A673 (cell line): ENCODE measurements at regions of chr6 and their contacts with region 1.

Region 1: DNA sequence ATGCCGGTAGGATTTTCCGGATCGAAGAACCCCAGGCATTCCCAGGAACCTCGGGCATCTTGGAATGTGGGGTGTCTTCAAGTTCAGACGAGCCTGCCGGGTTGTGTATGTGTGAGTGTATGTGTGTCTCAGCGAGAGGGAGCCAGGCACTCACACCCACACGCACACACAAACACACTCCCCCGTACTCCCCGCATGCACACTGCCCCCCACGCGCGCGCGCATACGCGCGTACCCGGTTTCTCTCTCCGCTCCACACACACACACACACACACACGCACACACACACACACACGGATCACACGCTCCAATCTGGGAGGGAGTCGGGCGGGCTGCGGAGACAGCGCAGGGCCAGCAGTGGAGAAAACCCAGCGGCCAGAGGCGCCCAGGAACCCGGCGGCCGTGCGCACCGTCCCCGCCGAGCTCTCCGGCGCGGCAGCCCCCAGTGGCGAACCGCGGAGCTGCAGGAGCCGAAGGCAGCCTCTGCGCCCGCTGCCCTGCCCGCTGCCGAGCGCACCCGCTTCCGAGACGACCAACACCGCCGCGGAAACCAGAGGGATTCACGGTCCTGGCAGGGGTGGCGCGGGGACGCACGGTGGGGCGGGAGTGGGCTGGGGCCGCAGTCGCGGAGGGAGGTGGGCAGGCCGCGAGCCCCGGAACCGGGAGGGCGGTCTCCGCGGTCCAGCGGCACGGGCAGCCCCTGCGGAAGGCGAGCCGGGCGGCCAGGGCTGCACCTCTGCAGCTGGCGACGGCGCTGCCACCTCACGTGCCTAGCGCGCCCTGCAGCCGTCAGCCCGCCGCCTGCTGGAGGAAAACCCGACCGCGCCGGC is at the start of gene LRFN2:
- DNase-seq: peak; percentile 93
- H3K4me3 ChIP-seq: peak within 1 kb of the TSS; percentile 90
- H3K27ac ChIP-seq: peak within 1 kb of the TSS; percentile 89
- H3K4me1 ChIP-seq: peaks cover 35% of the 10 kb centered on the region
- H3K27me3 ChIP-seq: no peaks in the 10 kb centered on the region
- CTCF ChIP-seq: peak; percentile 68
- total RNA-seq, gene LRFN2: 22.3 and 26.6 TPM in 2 replicates

Region 2: GRCh38 chr6:40328405-40328987 is 259.0 kb before region 1 on chr6:
- CTCF ChIA-PET with region 1: no interaction called
- POLR2A ChIA-PET with region 1: no interaction called
- intact Hi-C with region 1: loop called (anchors 10 kb)
- DNase-seq: peak; percentile 36
- H3K4me3 ChIP-seq: no peak overlapping the region
- H3K27ac ChIP-seq: no peak overlapping the region
- H3K4me1 ChIP-seq: peaks cover 44% of the 10 kb centered on the region
- H3K27me3 ChIP-seq: no peaks in the 10 kb centered on the region
- CTCF ChIP-seq: peak; percentile 71

Region 3: DNA sequence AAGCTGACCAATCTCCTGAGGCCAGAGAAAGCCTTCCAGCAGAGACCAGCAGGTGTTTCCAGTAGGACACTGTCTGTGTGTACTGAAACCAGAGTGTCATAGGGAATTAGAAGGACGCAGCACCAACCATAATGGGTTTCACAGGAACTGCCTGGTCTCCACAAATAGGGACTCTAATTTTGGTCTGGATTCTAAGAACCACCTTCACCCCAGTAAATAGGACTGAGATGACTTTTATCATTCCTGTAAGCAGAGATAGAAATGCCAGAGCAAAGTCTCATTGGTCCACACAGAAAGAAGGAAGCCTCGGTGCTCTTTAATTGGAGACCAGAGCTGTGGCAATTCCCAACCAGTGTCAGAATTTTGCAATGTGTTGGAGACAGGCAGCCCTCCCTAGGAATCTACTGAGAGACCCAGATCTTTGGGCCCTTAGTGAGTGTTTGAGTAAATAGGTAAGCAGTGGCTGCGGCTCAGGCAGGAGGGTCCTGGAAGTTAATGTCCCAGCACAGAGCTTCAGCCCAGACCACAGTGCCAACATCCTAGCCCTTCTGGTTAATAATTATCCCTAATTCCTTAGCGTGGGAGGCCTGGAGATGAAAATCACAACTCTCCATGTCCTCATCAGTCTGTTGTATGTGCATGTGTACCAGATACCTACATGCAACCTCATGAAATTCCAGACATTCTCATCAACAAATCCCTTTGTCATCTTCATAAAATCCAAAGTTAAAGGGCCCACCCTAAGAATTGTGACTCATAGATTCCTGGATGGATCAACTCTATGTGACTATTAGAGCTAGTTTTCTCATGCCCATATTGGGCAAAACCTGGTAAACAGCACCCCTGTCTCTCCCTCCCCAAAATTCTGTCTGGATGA is 370.4 kb after region 1 on chr6:
- CTCF ChIA-PET with region 1: no interaction called
- POLR2A ChIA-PET with region 1: no interaction called
- intact Hi-C with region 1: no loop called
- DNase-seq: no peak
- H3K4me3 ChIP-seq: no peak overlapping the region
- H3K27ac ChIP-seq: no peak overlapping the region
- H3K4me1 ChIP-seq: no peaks in the 10 kb centered on the region
- H3K27me3 ChIP-seq: no peaks in the 10 kb centered on the region
- CTCF ChIP-seq: no peak

Region 4: DNA sequence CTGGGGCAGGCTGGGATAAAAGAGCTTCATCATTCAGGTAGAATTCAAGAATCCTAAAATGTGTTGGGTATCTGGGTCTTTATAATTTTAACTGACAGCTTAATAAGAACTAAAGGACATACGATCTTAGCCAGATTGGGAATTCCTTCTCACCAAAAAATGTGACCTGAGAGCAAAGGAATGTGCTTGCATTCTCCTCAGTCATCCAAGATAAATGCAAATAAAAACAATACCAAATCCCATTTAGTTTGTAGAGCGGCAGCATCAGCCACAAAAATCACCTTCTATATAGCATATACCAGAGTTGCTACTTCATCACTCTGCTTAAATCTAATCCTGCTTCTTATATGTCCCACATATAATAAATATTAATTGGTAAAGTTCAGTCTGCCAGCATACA is 1290.8 kb after region 1 on chr6:
- CTCF ChIA-PET with region 1: no interaction called
- POLR2A ChIA-PET with region 1: no interaction called
- intact Hi-C with region 1: no loop called
- DNase-seq: no peak
- H3K4me3 ChIP-seq: no peak overlapping the region
- H3K27ac ChIP-seq: no peak overlapping the region
- H3K4me1 ChIP-seq: no peaks in the 10 kb centered on the region
- H3K27me3 ChIP-seq: no peaks in the 10 kb centered on the region
- CTCF ChIP-seq: no peak